ENCODE measurements at regions of chr15 and their contacts with region 1.

Region 1: GRCh38 chr15:82680200-82681102 is 29.2 kb downstream of the AP3B2 start:
- DNase-seq: peak; percentile 80 to 85 (median 82)
- H3K4me3 ChIP-seq: peak overlapping the region; percentile 70 to 92
- H3K4me3 Mint-ChIP-seq: peak overlapping the region; percentile 89 to 96 (median 91)
- H3K27ac ChIP-seq: peak overlapping the region; percentile 54
- H3K27ac Mint-ChIP-seq: peak overlapping the region; percentile 81 to 96 (median 92)
- H3K4me1 ChIP-seq: peaks cover 14% of the 10 kb centered on the region
- H3K4me1 Mint-ChIP-seq: peaks cover 7 to 16% (median 12%) of the 10 kb centered on the region in 4 donors
- H3K27me3 ChIP-seq: no peaks in the 10 kb centered on the region
- H3K27me3 Mint-ChIP-seq: peaks cover 3 to 6% of the 10 kb centered on the region in 2 donors

Region 2: DNA sequence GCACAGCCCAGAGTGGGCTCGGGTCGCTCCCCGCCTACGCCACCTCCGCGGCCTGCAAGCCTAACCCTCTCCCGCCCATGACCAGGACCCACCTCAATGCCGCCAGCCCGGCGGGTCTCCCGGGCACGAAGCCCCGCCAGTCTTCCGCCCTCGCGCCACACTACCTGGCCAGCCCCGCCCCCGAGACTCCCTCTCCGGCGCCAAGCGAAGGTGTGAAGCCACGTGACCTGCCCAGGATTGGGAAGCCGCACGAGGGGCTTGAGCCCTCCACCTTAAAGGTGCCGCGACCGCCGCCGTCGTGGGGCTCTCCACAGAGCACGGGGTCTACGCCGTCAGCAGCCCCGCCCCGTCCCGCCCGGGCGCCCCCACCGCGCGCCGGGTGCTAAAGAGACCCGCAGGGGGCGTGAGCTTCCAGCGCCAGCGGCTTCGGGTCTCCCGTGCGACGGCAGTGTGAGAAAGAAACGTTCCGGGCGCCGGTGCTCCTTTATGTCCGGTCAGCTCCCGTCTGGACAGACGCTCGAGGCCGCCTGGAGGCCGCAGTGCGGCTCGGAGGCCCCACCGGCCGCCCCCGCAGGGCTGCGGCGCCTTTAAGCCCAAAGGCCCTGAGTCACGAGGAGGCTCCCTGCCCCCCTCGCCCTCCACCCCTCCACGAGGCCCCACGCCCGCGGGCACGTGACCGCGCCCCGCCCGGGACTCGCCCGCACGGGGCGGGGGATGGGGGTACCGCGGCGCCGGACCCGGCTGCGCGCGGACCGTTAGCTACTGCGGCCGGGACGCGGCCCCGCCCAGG is 33.2 kb before region 1 on chr15 and contains the start of gene CPEB1:
- CTCF ChIA-PET with region 1: no interaction called
- POLR2A ChIA-PET with region 1: interaction called, 13 read pairs
- intact Hi-C with region 1: no loop called
- DNase-seq: peak in 4 of 5 donors; percentile 7 to 27 (median 14)
- H3K4me3 ChIP-seq: peak within 1 kb of the TSS in 1 of 2 donors; percentile 19
- H3K4me3 Mint-ChIP-seq: peak within 1 kb of the TSS; percentile 52 to 84 (median 76)
- H3K27ac ChIP-seq: no peak within 1 kb of the TSS
- H3K27ac Mint-ChIP-seq: peak within 1 kb of the TSS in 1 of 7 donors; percentile 29
- H3K4me1 ChIP-seq: peaks cover 17% of the 10 kb centered on the region
- H3K4me1 Mint-ChIP-seq: peaks cover 3 to 15% (median 9%) of the 10 kb centered on the region in 4 donors
- H3K27me3 ChIP-seq: peaks cover 19% of the 10 kb centered on the region
- H3K27me3 Mint-ChIP-seq: peaks cover 34 to 41% of the 10 kb centered on the region in 2 donors
- total RNA-seq, gene CPEB1: 0.17 to 0.38 TPM

Region 3: DNA sequence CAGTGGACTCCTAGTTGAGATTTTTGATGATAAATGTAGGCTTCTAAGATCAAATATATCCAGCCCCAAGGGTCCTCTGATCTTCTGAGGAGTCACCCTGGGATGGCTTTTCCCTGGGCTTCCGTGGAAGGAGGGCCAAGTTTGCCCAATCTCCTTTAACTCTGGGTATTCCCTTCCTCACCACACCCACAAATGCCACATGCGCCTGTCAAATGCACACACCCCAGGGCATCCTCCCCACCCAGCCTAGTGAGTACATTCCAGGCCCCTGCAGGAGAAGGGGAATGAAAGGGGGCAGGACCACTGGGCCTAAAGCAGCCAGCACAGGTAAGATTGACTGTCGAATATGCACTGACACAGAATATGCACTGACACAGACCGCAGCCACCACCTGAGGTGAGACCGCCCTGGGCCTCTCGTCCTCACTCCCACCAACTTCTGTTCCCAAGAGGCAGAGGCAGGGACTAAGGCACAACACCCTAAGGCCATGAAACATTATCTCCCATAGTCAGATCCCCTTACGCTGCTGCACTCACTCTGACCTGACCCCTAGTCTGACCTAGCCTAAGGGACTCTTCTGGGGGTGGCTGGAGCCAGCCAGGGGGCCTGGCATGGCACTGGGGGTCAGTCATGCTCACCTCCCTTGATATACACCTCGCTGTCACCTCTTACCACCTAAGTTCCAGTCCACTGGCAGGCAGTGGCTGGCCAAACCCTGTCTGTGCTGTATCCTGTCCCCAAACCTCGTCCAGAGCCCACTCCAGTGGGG is 18.3 kb after region 1 on chr15:
- CTCF ChIA-PET with region 1: no interaction called
- POLR2A ChIA-PET with region 1: no interaction called
- intact Hi-C with region 1: no loop called
- DNase-seq: no peak
- H3K4me3 ChIP-seq: no peak overlapping the region
- H3K4me3 Mint-ChIP-seq: no peak overlapping the region
- H3K27ac ChIP-seq: no peak overlapping the region
- H3K27ac Mint-ChIP-seq: no peak overlapping the region
- H3K4me1 ChIP-seq: no peaks in the 10 kb centered on the region
- H3K4me1 Mint-ChIP-seq: no peaks in the 10 kb centered on the region
- H3K27me3 ChIP-seq: no peaks in the 10 kb centered on the region
- H3K27me3 Mint-ChIP-seq: peaks cover 8 to 16% of the 10 kb centered on the region in 2 donors

Region 4: GRCh38 chr15:82709421-82710207 is 29.2 kb after region 1 on chr15 and contains the start of gene AP3B2:
- CTCF ChIA-PET with region 1: no interaction called
- POLR2A ChIA-PET with region 1: interaction called, 10 read pairs
- intact Hi-C with region 1: loop called (anchors 1 kb)
- DNase-seq: peak; percentile 57 to 69 (median 62)
- H3K4me3 ChIP-seq: peak within 1 kb of the TSS in 1 of 2 donors; percentile 57
- H3K4me3 Mint-ChIP-seq: peak within 1 kb of the TSS; percentile 61 to 83 (median 70)
- H3K27ac ChIP-seq: no peak within 1 kb of the TSS
- H3K27ac Mint-ChIP-seq: peak within 1 kb of the TSS in 1 of 7 donors; percentile 14
- H3K4me1 ChIP-seq: peaks cover 9% of the 10 kb centered on the region
- H3K4me1 Mint-ChIP-seq: peaks cover 0 to 6% (median 0%) of the 10 kb centered on the region in 4 donors
- H3K27me3 ChIP-seq: no peaks in the 10 kb centered on the region
- H3K27me3 Mint-ChIP-seq: peaks cover 4 to 15% of the 10 kb centered on the region in 2 donors
- total RNA-seq, gene AP3B2: 0.64 to 0.78 TPM

Region 5: DNA sequence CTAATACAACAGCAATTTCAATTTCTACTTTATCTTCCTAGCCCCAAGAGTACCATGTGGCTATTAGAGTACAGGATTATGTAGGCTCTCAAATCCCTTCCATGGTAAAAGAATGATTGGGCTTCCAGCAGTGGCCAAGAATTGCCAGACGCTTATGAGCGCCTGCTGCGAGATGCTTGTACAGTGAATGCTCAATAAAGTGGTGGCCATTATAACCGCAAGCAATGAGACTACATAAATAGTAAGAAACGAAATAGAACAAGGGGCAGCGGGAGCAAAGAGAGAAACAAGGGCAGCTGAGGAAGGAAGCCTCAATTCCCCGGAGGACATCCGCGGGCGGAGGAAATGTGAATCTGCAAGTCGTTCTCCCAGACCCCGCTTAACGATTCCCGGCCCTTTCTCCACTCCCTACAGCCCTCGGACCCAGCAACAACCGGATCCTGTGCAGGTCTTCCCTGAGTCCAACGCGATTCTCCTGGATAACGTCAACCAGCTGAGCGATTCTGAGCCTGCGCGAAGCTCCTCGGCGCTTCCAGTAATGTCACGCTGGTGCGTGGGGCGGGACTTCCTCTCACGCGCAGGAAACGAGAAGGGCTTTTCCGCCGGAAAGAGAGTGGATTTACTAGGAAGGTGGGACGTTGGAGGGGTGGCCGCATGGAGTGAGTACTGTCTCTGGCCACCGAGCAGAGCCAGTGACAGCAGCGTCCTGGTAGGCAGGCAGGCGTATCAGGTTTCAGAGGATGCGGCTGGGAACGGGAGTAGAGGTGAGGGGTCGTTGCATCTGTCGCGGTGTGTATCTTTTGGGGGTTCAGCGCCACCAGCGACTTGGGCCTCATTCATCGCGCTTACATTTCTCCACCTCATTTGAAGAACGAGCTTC is 69.7 kb after region 1 on chr15:
- CTCF ChIA-PET with region 1: interaction called, 4 read pairs
- POLR2A ChIA-PET with region 1: interaction called, 21 read pairs
- intact Hi-C with region 1: loop called (anchors 5 kb)
- DNase-seq: peak; percentile 65 to 87 (median 73)
- H3K4me3 ChIP-seq: peak overlapping the region; percentile 82 to 86
- H3K4me3 Mint-ChIP-seq: peak overlapping the region; percentile 96 to 100 (median 99)
- H3K27ac ChIP-seq: peak overlapping the region; percentile 74
- H3K27ac Mint-ChIP-seq: peak overlapping the region; percentile 77 to 99 (median 95)
- H3K4me1 ChIP-seq: peaks cover 23% of the 10 kb centered on the region
- H3K4me1 Mint-ChIP-seq: peaks cover 26 to 55% (median 40%) of the 10 kb centered on the region in 4 donors
- H3K27me3 ChIP-seq: no peaks in the 10 kb centered on the region
- H3K27me3 Mint-ChIP-seq: no peaks in the 10 kb centered on the region

Region 6: GRCh38 chr15:82809404-82810060 is 129.1 kb after region 1 on chr15 and contains the start of gene WHAMM:
- CTCF ChIA-PET with region 1: interaction called, 4 read pairs
- POLR2A ChIA-PET with region 1: interaction called, 21 read pairs
- intact Hi-C with region 1: loop called (anchors 1 kb)
- DNase-seq: peak; percentile 94 to 98 (median 96)
- H3K4me3 ChIP-seq: peak within 1 kb of the TSS; percentile 89 to 94
- H3K4me3 Mint-ChIP-seq: peak within 1 kb of the TSS; percentile 88 to 100 (median 96)
- H3K27ac ChIP-seq: peak within 1 kb of the TSS; percentile 99
- H3K27ac Mint-ChIP-seq: peak within 1 kb of the TSS; percentile 95 to 100 (median 97)
- H3K4me1 ChIP-seq: peaks cover 35% of the 10 kb centered on the region
- H3K4me1 Mint-ChIP-seq: peaks cover 15 to 40% (median 28%) of the 10 kb centered on the region in 4 donors
- H3K27me3 ChIP-seq: no peaks in the 10 kb centered on the region
- H3K27me3 Mint-ChIP-seq: no peaks in the 10 kb centered on the region
- total RNA-seq, gene WHAMM: 31.6 to 33.5 TPM

Region 7: DNA sequence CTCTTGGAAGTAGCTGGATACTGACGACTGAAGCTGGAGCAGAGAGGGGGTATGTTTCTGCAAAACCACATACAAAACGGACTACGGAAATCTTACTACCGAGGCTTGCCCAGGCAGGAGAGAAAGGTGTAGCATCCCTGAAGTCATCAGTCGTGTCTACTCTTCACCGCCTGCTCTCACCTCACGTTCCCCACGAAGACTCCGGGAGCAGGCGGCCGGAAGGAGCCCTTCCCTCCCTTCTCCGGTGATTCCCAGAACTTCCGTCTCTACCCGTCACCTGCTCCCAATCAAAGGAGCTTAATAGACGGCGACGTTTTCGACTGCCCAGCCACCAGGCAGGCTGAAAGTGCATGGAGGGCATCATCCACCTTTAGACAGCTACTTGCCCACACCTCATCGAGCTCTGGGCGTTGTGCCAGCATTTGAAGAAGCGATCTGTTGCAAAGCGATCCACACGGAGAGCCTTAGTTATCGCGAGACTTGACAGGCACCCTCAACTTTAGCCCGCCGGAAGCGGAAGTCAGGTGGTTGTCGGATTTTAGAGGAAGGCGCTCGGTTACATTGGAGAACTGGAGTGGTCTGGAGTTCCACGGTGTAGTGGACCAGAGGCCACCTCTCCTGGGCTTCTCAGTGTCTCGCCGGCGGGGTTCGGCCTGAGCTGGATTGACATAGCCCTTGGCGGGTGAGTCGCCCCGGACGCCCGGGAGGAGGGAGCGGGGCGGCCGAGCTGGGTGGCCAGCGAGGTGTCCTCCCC is 305.4 kb after region 1 on chr15 and contains the start of gene RAMAC:
- CTCF ChIA-PET with region 1: no interaction called
- POLR2A ChIA-PET with region 1: interaction called, 6 read pairs
- intact Hi-C with region 1: loop called (anchors 10 kb)
- DNase-seq: peak; percentile 90 to 98 (median 93)
- H3K4me3 ChIP-seq: peak within 1 kb of the TSS; percentile 87 to 91
- H3K4me3 Mint-ChIP-seq: peak within 1 kb of the TSS; percentile 96 to 99 (median 99)
- H3K27ac ChIP-seq: peak within 1 kb of the TSS; percentile 71
- H3K27ac Mint-ChIP-seq: peak within 1 kb of the TSS; percentile 91 to 99 (median 96)
- H3K4me1 ChIP-seq: peaks cover 18% of the 10 kb centered on the region
- H3K4me1 Mint-ChIP-seq: peaks cover 15 to 32% (median 25%) of the 10 kb centered on the region in 4 donors
- H3K27me3 ChIP-seq: no peaks in the 10 kb centered on the region
- H3K27me3 Mint-ChIP-seq: no peaks in the 10 kb centered on the region
- total RNA-seq, gene RAMAC: 19.3 to 22.0 TPM

Measured in CD4-positive, alpha-beta memory T cell (primary cell).